Caco-2 (cell line): ENCODE measurements at regions of chr2 and their contacts with region 1.

Region 1: DNA sequence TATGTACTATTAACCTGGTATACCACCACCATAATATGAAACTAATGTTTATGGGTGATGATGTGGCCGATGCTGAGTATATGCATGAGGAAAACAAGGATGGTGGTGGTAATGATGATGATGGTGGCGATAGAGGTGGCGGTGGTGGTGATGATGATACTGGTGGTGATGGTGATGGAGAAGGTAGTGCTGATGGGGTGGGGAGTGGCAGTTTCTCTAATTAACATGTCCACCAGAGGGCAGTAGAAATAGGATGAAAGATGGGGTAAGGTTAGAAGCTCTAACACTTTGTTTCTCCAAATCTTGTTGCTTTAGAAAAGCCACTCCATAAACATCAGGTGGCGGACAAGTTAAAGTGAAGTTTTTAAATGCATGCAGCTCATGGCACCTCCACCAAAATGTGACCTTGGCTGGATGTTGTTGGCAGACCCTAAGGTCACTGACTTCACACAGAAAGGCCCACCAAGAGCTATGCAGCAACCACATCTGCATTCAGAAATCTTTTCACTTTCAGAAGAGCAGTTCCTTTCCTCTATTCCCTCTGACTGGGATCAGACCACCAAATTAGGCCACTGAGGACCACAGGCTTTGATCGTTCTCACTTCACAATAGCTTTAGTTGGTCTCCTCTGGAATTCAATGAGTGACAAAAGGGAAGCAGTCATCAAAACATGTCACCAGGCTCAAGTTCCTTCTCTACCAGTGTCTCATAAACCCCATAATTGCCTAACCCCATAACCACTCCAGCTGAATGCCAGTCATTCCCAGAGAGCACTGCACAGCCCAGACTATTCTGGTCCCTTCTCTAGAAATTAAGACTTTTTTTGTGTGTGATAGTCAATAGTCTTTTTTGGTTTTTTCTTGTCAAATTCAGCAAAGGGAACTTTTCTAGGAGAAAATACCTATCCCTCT is 7.5 kb upstream of the BCL11A start:
- DNase-seq: peak in 1 of 2 experiments; percentile 62
- H3K4me3 ChIP-seq: no peak overlapping the region
- H3K4me3 Mint-ChIP-seq: no peak overlapping the region
- H3K27ac Mint-ChIP-seq: no peak overlapping the region
- H3K4me1 ChIP-seq: no peaks in the 10 kb centered on the region
- H3K4me1 Mint-ChIP-seq: peaks cover 10% of the 10 kb centered on the region
- H3K27me3 ChIP-seq: no peaks in the 10 kb centered on the region
- H3K27me3 Mint-ChIP-seq: peaks cover 34% of the 10 kb centered on the region
- CTCF ChIP-seq: peak; percentile 17 to 60

Region 2: DNA sequence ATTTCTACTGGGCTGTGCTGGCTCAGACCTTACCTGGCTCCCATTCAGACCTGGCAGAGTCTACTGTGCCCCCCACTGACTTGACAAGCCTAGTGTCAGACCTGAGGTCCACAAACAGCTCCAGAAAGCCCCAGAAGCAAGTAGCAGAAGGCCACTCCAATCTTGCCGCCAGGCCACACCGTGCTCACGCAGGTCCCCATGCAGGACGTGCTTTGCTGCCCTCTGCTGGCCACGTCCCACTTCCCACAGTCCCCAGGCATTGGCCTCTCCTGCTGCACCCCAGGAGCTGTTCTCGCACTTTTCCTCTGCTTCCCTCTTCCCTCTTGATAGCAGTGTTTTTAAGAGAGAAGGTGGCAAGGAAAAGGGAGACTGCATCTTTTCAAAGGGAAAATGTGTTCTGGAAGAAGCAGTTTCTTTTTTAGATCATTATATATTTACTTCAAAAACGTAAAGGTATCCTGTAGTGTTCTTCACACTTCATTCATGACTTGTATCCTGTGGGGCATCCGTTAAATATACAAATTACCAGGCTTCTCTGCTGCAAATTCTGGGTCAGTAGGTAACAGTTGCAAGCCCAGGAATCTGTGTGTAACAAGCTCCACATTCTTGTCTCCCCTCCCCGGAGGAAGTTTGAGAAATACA is 113.7 kb after region 1 on chr2:
- CTCF ChIA-PET with region 1: interaction called, 16 read pairs
- POLR2A ChIA-PET with region 1: no interaction called
- intact Hi-C with region 1: loop called (anchors 1 kb)
- DNase-seq: peak; percentile 87 to 90
- H3K4me3 ChIP-seq: no peak overlapping the region
- H3K4me3 Mint-ChIP-seq: no peak overlapping the region
- H3K27ac Mint-ChIP-seq: no peak overlapping the region
- H3K4me1 ChIP-seq: no peaks in the 10 kb centered on the region
- H3K4me1 Mint-ChIP-seq: no peaks in the 10 kb centered on the region
- H3K27me3 ChIP-seq: no peaks in the 10 kb centered on the region
- H3K27me3 Mint-ChIP-seq: peaks cover 6% of the 10 kb centered on the region
- CTCF ChIP-seq: peak; percentile 91 to 98